H1 (cell line): ENCODE measurements at regions of chr5 and their contacts with region 1.

Region 1: GRCh38 chr5:54867310-54867944 is 118.0 kb downstream of the ESM1 start:
- DNase-seq: no peak
- H3K4me3 ChIP-seq: no peak overlapping the region
- H3K27ac ChIP-seq: no peak overlapping the region
- H3K4me1 ChIP-seq: no peaks in the 10 kb centered on the region
- H3K27me3 ChIP-seq: peaks cover 0 to 1% (median 0%) of the 10 kb centered on the region in 4 experiments; a peak in 1 of 7 replicates
- CTCF ChIP-seq: peak in 1 of 3 experiments; percentile 11; a peak in 1 of 4 replicates
- EP300 ChIP-seq: no peak
- POLR2A ChIP-seq: no peak
- RAD21 ChIP-seq: peak; percentile 47 to 51

Region 2: GRCh38 chr5:54703133-54703532 is 164.3 kb before region 1 on chr5:
- CTCF ChIA-PET with region 1: no interaction called
- POLR2A ChIA-PET with region 1: no interaction called
- DNase-seq: no peak
- H3K4me3 ChIP-seq: no peak overlapping the region
- H3K27ac ChIP-seq: no peak overlapping the region
- H3K4me1 ChIP-seq: peaks cover 0 to 9% (median 3%) of the 10 kb centered on the region in 4 experiments; a peak in 5 of 7 replicates
- H3K27me3 ChIP-seq: no peaks in the 10 kb centered on the region
- CTCF ChIP-seq: no peak
- EP300 ChIP-seq: no peak
- POLR2A ChIP-seq: no peak
- RAD21 ChIP-seq: no peak

Region 3: DNA sequence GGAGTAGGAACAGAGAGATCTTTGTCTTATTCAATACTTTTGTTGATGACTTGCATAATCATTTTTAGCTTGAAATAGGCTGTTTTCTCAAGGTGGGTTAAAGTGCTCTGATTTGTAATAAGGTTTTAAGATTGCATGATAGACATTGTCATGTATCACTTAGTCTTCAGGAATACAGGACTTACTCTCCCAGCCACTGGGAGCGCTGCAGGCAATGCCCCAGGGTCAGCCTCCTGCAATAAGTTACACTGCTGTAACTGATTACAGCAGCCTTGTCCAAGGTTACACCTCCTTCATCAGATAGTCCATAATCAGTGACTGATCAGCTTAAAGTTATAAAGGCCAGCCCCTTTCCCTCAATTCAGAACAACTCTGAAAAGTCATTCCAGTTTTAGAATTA is 100.7 kb before region 1 on chr5:
- CTCF ChIA-PET with region 1: interaction called, 12 read pairs
- POLR2A ChIA-PET with region 1: no interaction called
- DNase-seq: no peak
- H3K4me3 ChIP-seq: no peak overlapping the region
- H3K27ac ChIP-seq: no peak overlapping the region
- H3K4me1 ChIP-seq: no peaks in the 10 kb centered on the region
- H3K27me3 ChIP-seq: peaks cover 0 to 1% (median 0%) of the 10 kb centered on the region in 4 experiments; a peak in 1 of 7 replicates
- CTCF ChIP-seq: peak; percentile 14 to 49 (median 42); a peak in 2 of 4 replicates
- EP300 ChIP-seq: no peak
- POLR2A ChIP-seq: no peak
- RAD21 ChIP-seq: peak; percentile 21 to 29; a peak in 3 of 4 replicates

Region 4: DNA sequence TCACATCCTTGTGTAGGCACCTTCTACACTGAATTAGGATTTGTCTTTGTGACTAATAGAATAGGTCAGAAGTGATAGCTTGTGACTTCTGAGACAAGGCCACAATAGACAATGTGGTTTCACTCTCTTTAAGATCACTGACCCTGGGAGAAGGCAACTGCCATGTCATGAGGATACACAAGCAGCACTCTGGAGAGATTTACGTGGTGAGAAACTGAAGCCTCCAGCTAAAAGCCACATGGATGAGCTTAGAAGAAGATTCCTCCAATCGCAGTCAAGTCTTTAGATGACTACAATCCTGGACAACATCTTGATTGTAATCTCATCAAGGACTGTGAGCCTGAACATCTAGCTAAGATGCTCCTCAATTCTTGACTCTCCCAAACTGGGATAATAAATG is 88.6 kb before region 1 on chr5:
- CTCF ChIA-PET with region 1: no interaction called
- POLR2A ChIA-PET with region 1: no interaction called
- DNase-seq: no peak
- H3K4me3 ChIP-seq: no peak overlapping the region
- H3K27ac ChIP-seq: no peak overlapping the region
- H3K4me1 ChIP-seq: no peaks in the 10 kb centered on the region
- H3K27me3 ChIP-seq: no peaks in the 10 kb centered on the region
- CTCF ChIP-seq: no peak
- EP300 ChIP-seq: no peak
- POLR2A ChIP-seq: no peak
- RAD21 ChIP-seq: no peak

Region 5: GRCh38 chr5:54852007-54852406 is 15.4 kb before region 1 on chr5:
- CTCF ChIA-PET with region 1: interaction called, 23 read pairs
- POLR2A ChIA-PET with region 1: no interaction called
- DNase-seq: no peak
- H3K4me3 ChIP-seq: no peak overlapping the region
- H3K27ac ChIP-seq: no peak overlapping the region
- H3K4me1 ChIP-seq: no peaks in the 10 kb centered on the region
- H3K27me3 ChIP-seq: no peaks in the 10 kb centered on the region
- CTCF ChIP-seq: peak in 1 of 3 experiments; percentile 29; a peak in 1 of 4 replicates
- EP300 ChIP-seq: no peak
- POLR2A ChIP-seq: no peak
- RAD21 ChIP-seq: 0 out of 4 replicates have a peak, but pooled peaks of 1 of the 2 experiments have one; percentile 2